B cell (primary cell): ENCODE measurements at regions of chr7 and their contacts with region 1.

Region 1: DNA sequence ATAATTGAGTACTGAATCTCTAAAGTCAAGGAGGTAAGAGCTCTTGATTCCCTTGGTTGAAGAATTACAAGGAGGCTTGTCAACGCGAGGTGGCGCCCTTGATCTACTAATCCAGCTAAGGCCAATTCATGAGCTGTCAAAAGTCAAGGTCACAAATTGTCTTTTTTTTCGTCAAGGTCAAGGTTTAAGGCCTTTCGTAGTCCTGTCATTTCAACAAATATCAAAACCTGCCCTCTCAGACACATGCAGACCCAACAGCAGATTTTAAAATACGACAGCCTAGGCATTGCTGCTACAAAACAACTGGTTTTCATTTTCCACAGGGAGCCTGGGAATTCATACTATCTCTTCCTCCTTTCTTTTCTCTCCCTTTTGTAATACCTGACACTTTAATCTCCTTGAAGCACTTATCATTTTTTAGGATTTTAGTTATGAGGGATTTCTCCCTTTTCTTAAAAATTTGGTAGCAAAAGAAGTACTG is 3.6 kb downstream of the HOXA13 start:
- DNase-seq: peak; percentile 84
- ATAC-seq: no peak
- H3K4me3 ChIP-seq: no peak overlapping the region
- H3K4me3 Mint-ChIP-seq: no peak overlapping the region
- H3K27ac ChIP-seq: no peak overlapping the region
- H3K27ac Mint-ChIP-seq: peak overlapping the region; percentile 64
- H3K4me1 ChIP-seq: peaks cover 44 to 64% of the 10 kb centered on the region in 2 donors
- H3K4me1 Mint-ChIP-seq: peaks cover 34% of the 10 kb centered on the region
- H3K27me3 ChIP-seq: peaks cover 3 to 82% (median 76%) of the 10 kb centered on the region in 4 experiments
- H3K27me3 Mint-ChIP-seq: peaks cover 79% of the 10 kb centered on the region
- CTCF ChIP-seq: peak; percentile 96

Region 2: GRCh38 chr7:26900251-26900650 is 296.1 kb before region 1 on chr7:
- CTCF ChIA-PET with region 1: no interaction called
- POLR2A ChIA-PET with region 1: no interaction called
- intact Hi-C with region 1: no loop called
- DNase-seq: no peak
- ATAC-seq: no peak
- H3K4me3 ChIP-seq: no peak overlapping the region
- H3K4me3 Mint-ChIP-seq: no peak overlapping the region
- H3K27ac ChIP-seq: no peak overlapping the region
- H3K27ac Mint-ChIP-seq: no peak overlapping the region
- H3K4me1 ChIP-seq: no peaks in the 10 kb centered on the region
- H3K4me1 Mint-ChIP-seq: no peaks in the 10 kb centered on the region
- H3K27me3 ChIP-seq: peaks cover 0 to 7% (median 2%) of the 10 kb centered on the region in 4 experiments
- H3K27me3 Mint-ChIP-seq: peaks cover 31% of the 10 kb centered on the region
- CTCF ChIP-seq: no peak

Region 3: GRCh38 chr7:27185013-27185855 is 11.1 kb before region 1 on chr7 and contains the start of gene HOXA11:
- CTCF ChIA-PET with region 1: interaction called, 19 read pairs
- POLR2A ChIA-PET with region 1: no interaction called
- intact Hi-C with region 1: no loop called
- DNase-seq: peak; percentile 62
- ATAC-seq: no peak
- H3K4me3 ChIP-seq: peak within 1 kb of the TSS in 4 of 5 experiments; percentile 11 to 28 (median 19)
- H3K4me3 Mint-ChIP-seq: peak within 1 kb of the TSS; percentile 78
- H3K27ac ChIP-seq: no peak within 1 kb of the TSS
- H3K27ac Mint-ChIP-seq: peak within 1 kb of the TSS; percentile 77
- H3K4me1 ChIP-seq: peaks cover 50 to 71% of the 10 kb centered on the region in 2 donors
- H3K4me1 Mint-ChIP-seq: peaks cover 41% of the 10 kb centered on the region
- H3K27me3 ChIP-seq: peaks cover 0 to 96% (median 80%) of the 10 kb centered on the region in 4 experiments
- H3K27me3 Mint-ChIP-seq: peaks cover 77% of the 10 kb centered on the region
- CTCF ChIP-seq: no peak
- total RNA-seq, gene HOXA11: not detected in 2 replicates

Region 4: DNA sequence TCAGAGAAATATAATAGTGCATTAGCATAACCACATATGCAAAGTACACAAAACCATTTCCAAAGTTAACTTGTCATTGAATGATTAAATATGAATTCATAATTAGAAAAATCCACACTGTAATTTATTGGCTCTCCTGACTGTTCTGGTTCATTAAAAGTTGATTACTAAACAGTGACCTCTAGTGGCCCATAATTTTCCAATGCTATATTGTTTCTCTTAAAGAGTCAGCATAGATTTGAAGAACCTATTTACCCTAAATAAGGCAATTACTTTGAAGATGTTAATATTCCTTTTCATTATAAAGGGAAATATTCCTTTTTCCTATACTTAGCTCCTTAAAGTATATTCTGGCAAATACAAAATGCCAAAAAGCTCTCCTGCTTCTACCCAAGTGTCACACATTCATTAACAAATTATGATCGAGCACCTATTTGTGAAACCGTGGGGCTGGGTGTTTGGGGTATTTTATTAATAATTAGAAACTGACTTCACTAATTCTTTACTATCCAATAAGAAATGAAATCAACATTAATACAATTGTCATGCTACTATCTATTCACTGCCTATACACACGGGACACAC is 380.1 kb after region 1 on chr7:
- CTCF ChIA-PET with region 1: interaction called, 10 read pairs
- POLR2A ChIA-PET with region 1: no interaction called
- intact Hi-C with region 1: loop called (anchors 1 kb)
- DNase-seq: peak; percentile 46
- ATAC-seq: no peak
- H3K4me3 ChIP-seq: no peak overlapping the region
- H3K4me3 Mint-ChIP-seq: no peak overlapping the region
- H3K27ac ChIP-seq: no peak overlapping the region
- H3K27ac Mint-ChIP-seq: no peak overlapping the region
- H3K4me1 ChIP-seq: no peaks in the 10 kb centered on the region
- H3K4me1 Mint-ChIP-seq: no peaks in the 10 kb centered on the region
- H3K27me3 ChIP-seq: no peaks in the 10 kb centered on the region
- H3K27me3 Mint-ChIP-seq: no peaks in the 10 kb centered on the region
- CTCF ChIP-seq: peak; percentile 73

Region 5: GRCh38 chr7:27784393-27785053 is 588.2 kb after region 1 on chr7:
- CTCF ChIA-PET with region 1: interaction called, 14 read pairs
- POLR2A ChIA-PET with region 1: no interaction called
- intact Hi-C with region 1: loop called (anchors 1 kb)
- DNase-seq: peak; percentile 59
- ATAC-seq: peak; percentile 28
- H3K4me3 ChIP-seq: no peak overlapping the region
- H3K4me3 Mint-ChIP-seq: no peak overlapping the region
- H3K27ac ChIP-seq: no peak overlapping the region
- H3K27ac Mint-ChIP-seq: no peak overlapping the region
- H3K4me1 ChIP-seq: no peaks in the 10 kb centered on the region
- H3K4me1 Mint-ChIP-seq: no peaks in the 10 kb centered on the region
- H3K27me3 ChIP-seq: no peaks in the 10 kb centered on the region
- H3K27me3 Mint-ChIP-seq: no peaks in the 10 kb centered on the region
- CTCF ChIP-seq: peak; percentile 80

Region 6: DNA sequence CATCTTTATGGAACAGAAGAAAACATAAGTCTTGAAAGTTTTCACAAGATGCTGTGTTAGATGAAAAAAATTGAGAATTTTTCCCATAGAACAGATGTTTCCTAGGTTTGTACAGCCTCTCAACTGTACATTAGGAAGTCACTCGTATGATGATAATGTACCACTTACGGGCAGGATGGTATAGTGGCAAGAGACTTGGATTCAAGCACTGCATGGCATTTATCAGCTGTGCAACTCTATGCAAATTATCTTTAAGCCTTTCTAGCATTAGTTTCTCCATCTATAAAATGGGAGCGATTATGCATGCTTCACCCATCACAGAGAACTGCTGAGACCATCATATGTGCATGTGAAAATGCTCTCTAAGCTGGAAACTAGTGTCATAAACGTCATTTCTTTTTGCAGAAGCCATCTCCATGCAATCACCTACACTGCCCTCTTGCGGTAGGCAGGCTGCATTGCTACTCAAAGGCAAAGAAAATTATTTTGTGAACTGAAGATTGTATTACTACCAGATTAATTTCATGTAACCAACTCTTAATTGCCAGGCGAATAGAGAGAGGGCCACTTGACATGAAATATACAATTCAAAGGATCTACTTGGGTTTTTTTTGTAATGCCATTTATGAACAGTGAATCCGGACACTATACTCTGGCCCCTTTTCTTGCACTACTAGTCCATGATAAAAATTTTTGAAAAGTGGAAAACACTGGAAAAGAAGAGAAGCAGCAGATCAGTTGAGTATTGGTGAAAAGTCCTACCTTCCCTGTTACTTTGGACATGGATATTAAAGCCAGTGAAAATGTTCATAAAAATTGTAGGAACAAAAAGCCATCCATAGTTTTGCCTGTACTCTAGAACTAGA is 881.9 kb after region 1 on chr7:
- CTCF ChIA-PET with region 1: interaction called, 13 read pairs
- POLR2A ChIA-PET with region 1: no interaction called
- intact Hi-C with region 1: no loop called
- DNase-seq: peak; percentile 64
- ATAC-seq: peak; percentile 68
- H3K4me3 ChIP-seq: no peak overlapping the region
- H3K4me3 Mint-ChIP-seq: no peak overlapping the region
- H3K27ac ChIP-seq: no peak overlapping the region
- H3K27ac Mint-ChIP-seq: no peak overlapping the region
- H3K4me1 ChIP-seq: peaks cover 9 to 15% of the 10 kb centered on the region in 2 donors
- H3K4me1 Mint-ChIP-seq: peaks cover 44% of the 10 kb centered on the region
- H3K27me3 ChIP-seq: no peaks in the 10 kb centered on the region
- H3K27me3 Mint-ChIP-seq: no peaks in the 10 kb centered on the region
- CTCF ChIP-seq: peak; percentile 100